Dorsolateral prefrontal cortex (tissue), 120 donors: ENCODE measurements at regions of chr9 and their contacts with region 1.

Region 1: DNA sequence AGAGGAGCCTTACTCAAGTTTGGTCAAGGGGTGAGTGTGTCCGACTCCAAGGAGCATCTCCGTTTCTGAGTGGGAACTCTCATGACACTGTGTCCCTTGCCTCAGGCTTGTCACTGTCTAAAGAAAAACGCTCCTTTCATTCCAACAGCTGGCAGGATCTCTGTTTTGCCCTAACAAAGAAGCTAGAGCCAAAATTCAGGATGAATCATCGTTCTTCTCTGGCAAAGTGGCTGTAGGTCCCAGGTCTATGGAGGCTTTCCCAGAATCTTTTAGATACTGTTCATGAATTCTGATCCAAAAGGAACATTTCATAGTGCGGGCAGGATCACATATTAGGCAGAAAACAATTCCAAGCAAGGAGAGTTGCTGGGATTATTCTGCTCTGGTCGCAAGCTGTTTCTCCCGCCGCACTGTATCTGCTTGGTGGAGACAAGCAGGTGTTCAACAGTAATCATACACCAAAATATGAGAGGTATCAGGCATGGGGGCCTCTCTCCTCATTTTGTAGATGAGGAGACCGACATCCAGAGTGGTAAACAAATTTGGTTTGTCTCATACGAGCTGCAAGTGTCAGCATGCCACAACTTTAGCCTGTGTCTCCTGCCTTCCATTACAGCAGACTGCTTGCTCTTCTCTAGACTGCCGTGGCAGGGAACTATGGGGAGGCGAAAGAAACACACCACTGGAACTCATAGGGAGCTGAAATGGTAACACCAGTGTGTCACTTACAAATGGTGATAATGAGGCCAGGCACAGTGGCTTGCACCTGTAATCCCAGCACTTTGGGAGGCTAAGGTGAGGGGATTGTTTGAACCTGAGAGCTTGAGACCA is 72.6 kb downstream of the ENTREP1 start:
- DNase-seq: peak in 1 of 10 donors; percentile 23
- H3K4me3 ChIP-seq: peak overlapping the region in 21 of 59 donors; percentile 1 to 38 (median 15)
- H3K27ac ChIP-seq: peak overlapping the region in 45 of 59 donors; percentile 9 to 82 (median 62)
- H3K27me3 ChIP-seq: no peaks in the 10 kb centered on the region
- CTCF ChIP-seq: no peak

Region 2: DNA sequence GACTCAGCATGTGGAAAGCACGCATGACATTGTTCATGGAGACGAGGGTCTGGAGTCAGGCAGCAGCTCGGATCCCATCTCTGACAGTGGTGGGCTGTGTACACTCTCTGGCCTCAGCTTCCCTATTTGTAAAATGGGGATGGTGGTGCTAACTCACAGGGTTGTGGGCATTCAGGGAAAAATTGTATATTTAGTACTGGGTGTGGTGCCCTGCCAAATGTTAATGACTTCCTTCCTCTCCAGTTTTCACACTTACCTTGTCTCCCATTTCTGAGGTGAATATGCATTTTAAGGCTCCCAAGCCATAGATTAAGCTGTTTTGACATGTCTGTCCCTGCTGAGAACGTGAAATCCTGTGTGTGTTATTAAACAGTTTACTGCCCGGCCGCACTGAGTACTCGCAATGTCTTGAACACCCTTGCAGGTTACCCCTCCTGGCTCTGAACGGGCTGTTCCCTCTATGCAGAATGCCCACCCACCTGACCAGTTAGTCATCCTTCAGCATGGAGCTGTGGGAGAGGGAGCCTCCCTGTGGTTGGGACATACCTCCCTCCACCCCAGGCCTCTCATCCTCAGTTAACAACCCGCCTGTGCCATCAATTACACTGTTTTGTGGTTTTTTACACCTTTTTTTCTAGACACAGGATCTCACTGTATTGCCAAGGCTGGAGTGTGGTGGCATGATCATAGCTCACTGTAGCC is 197.7 kb before region 1 on chr9:
- intact Hi-C with region 1: loop called in 1 of 2 experiments (anchors 10 kb)
- DNase-seq: peak in 1 of 10 donors; percentile 47
- H3K4me3 ChIP-seq: no peak overlapping the region
- H3K27ac ChIP-seq: peak overlapping the region in 21 of 59 donors; percentile 15 to 99 (median 81)
- H3K27me3 ChIP-seq: no peaks in the 10 kb centered on the region
- CTCF ChIP-seq: peak in 1 of 56 donors; percentile 36

Region 3: DNA sequence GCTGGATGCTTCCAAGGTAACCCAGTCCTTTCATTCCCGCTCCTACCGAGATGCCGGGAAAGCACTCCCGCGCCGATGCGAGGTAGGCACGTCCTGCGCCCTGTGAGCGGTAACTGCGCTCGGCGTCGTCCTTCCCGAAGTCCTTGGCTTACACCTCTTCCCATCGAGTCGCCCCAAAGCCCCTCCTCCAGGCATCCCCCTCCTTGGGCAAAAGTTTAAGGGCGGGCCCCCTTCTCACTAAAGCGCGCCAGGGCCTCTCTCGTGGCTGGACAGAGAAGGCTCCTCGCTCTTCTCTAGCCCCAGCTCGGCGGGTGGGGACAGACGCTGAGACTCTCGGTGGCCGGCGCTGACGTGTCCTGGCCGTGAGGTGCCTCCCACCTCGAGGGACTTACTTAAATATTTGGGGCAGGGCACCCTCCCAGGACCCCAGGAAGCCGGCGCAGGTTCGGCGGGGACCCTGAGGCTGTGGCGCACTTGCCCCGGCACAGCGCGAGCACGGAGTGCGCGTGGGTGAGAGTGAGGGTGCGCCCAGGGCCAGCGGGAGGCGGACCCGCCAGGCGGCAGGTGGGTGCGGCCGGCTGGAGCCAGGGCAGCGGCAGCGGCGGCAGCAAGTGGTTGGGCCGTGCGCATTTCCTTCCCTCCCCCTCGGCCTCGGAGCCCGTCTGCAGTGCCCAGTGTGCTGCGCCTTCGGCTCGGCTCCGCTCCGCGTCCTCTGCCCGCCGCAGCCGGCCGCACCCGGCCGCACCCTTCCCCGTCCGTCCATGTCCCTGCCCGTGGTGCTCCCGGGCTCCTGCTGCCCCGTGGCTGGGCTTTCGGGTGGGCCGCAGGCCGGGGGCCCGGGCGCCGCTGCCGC is 72.8 kb before region 1 on chr9 and contains the start of gene ENTREP1:
- intact Hi-C with region 1: loop called in 1 of 2 experiments (anchors 5 kb)
- DNase-seq: peak in 8 of 10 donors; percentile 7 to 62 (median 40)
- H3K4me3 ChIP-seq: peak within 1 kb of the TSS; percentile 45 to 73 (median 63)
- H3K27ac ChIP-seq: peak within 1 kb of the TSS in 50 of 59 donors; percentile 9 to 85 (median 62)
- H3K27me3 ChIP-seq: peaks cover 0 to 17% (median 0%) of the 10 kb centered on the region in 45 donors
- CTCF ChIP-seq: peak in 3 of 56 donors; percentile 10 to 11 (median 10)
- total RNA-seq, gene ENTREP1: 11.8 to 91.1 (median 24.5) TPM